Naive thymus-derived CD8-positive, alpha-beta T cell (primary cell): ENCODE measurements at regions of chr3 and their contacts with region 1.

Region 1: GRCh38 chr3:141303481-141304223 is 64.7 kb upstream of the ZBTB38 start:
- DNase-seq: peak in 9 of 10 donors; percentile 39 to 82 (median 72)
- ATAC-seq: peak; percentile 37 to 60
- H3K4me3 Mint-ChIP-seq: no peak overlapping the region
- H3K27ac Mint-ChIP-seq: peak overlapping the region in 4 of 10 donors; percentile 11 to 75 (median 30)
- H3K4me1 Mint-ChIP-seq: peaks cover 32 to 92% (median 60%) of the 10 kb centered on the region in 4 donors
- H3K27me3 Mint-ChIP-seq: no peaks in the 10 kb centered on the region

Region 2: DNA sequence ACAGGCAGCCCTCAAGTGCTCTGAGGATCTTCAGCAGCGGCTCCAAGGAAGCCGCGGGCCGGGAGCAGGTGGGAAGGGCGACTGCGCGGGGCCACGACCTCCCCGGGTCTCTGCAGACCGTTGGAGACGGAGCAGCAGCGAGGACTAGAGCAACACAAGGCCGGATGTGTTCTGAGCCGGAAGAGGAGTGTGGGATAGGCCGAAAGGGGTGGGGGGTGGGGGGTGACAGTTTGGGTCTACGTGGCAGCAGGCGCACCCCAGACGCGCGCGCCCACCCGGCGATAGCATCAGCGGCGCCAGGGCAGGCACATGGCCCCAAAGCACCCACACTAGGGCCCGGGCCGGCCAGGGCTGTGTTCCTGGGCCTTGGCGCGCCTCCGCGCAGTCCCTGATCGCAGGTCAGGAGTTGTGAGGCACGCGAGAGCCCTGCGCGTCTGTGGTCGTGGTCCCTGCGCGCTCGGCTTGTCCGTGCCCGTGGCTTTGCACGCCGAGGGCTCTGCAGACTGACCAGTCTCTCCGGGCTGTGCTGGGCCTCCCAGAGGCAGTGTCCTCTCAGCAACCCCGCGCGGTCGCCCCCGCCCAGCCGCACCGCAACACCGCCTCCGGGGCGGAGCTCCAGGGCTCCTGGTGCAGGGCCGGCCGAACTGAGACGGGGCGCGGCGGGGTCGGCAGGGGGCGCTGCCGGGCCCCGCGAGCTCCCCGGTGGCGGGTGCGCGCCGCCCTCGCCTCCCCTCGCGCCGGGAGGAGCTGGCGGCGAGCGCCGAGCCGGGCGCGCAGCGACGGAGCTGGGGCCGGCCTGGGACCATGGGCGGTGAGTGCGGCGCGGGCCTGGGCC is 72.3 kb before region 1 on chr3 and contains the start of gene PXYLP1:
- POLR2A ChIA-PET with region 1: interaction called, 58 read pairs
- DNase-seq: peak; percentile 77 to 91 (median 90)
- ATAC-seq: peak; percentile 88 to 89
- H3K4me3 Mint-ChIP-seq: peak within 1 kb of the TSS; percentile 89 to 98 (median 93)
- H3K27ac Mint-ChIP-seq: peak within 1 kb of the TSS; percentile 95 to 99 (median 98)
- H3K4me1 Mint-ChIP-seq: peaks cover 33 to 70% (median 52%) of the 10 kb centered on the region in 4 donors
- H3K27me3 Mint-ChIP-seq: no peaks in the 10 kb centered on the region
- polyA plus RNA-seq, gene PXYLP1: 9.9 to 18.3 (median 16.9) TPM

Region 3: GRCh38 chr3:141266797-141267555 is 36.7 kb before region 1 on chr3:
- POLR2A ChIA-PET with region 1: interaction called, 53 read pairs
- DNase-seq: peak; percentile 7 to 83 (median 42)
- ATAC-seq: peak; percentile 87 to 88
- H3K4me3 Mint-ChIP-seq: peak overlapping the region; percentile 81 to 96 (median 92)
- H3K27ac Mint-ChIP-seq: peak overlapping the region; percentile 94 to 99 (median 98)
- H3K4me1 Mint-ChIP-seq: peaks cover 36 to 71% (median 48%) of the 10 kb centered on the region in 4 donors
- H3K27me3 Mint-ChIP-seq: no peaks in the 10 kb centered on the region

Region 4: DNA sequence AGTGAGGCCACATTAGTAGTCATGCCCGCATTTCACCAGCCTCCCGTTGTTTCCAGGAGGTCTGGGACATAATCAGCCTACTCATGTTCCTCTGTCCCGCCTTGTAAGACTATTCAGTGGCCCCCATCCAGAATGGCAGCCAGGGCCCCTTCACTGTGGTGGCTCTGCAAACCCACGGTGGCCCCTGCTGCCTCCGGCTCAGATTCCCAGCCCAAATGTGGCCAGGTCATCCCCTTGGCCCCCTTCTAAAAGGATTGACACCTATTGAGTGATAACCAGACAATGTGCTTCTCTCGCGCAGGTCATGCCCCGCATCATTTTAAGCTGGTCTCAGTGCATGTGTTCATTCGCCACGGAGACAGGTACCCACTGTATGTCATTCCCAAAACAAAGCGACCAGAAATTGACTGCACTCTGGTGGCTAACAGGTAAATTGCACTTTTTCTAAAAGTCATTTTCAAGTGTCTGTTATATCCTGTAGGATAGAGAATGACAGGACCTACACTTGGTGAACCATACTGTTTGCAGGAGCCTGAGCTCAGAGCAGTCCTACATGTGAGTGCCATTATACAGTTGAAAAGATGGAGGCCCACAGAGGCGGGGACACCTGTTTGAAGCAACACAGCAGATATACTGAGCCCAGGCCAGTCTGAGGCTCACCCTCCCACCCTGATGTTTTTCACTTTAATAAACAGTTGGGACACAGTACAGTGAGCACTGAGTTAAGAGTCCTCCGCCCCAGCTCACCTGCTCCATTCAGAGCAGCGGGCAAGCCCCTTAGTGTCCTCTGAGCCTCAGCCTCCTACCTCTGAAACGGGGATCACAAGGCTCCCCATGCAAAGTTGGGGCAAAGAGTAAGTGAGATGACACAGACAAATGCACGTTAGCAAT is 24.3 kb before region 1 on chr3:
- POLR2A ChIA-PET with region 1: interaction called, 11 read pairs
- DNase-seq: peak in 6 of 10 donors; percentile 17 to 67 (median 43)
- ATAC-seq: peak; percentile 88 to 93
- H3K4me3 Mint-ChIP-seq: peak overlapping the region in 2 of 10 donors; percentile 18 to 22
- H3K27ac Mint-ChIP-seq: peak overlapping the region in 7 of 10 donors; percentile 22 to 83 (median 54)
- H3K4me1 Mint-ChIP-seq: peaks cover 17 to 31% (median 22%) of the 10 kb centered on the region in 4 donors
- H3K27me3 Mint-ChIP-seq: no peaks in the 10 kb centered on the region

Region 5: GRCh38 chr3:141370065-141370533 is 66.4 kb after region 1 on chr3:
- POLR2A ChIA-PET with region 1: interaction called, 10 read pairs
- DNase-seq: peak; percentile 23 to 89 (median 73)
- ATAC-seq: peak; percentile 100
- H3K4me3 Mint-ChIP-seq: no peak overlapping the region
- H3K27ac Mint-ChIP-seq: peak overlapping the region in 4 of 10 donors; percentile 3 to 63 (median 34)
- H3K4me1 Mint-ChIP-seq: peaks cover 0 to 10% (median 7%) of the 10 kb centered on the region in 4 donors
- H3K27me3 Mint-ChIP-seq: no peaks in the 10 kb centered on the region

Region 6: GRCh38 chr3:141452036-141452435 is 148.4 kb after region 1 on chr3:
- POLR2A ChIA-PET with region 1: interaction called, 46 read pairs
- DNase-seq: peak in 8 of 10 donors; percentile 18 to 77 (median 56)
- ATAC-seq: peak; percentile 96 to 97
- H3K4me3 Mint-ChIP-seq: no peak overlapping the region
- H3K27ac Mint-ChIP-seq: no peak overlapping the region
- H3K4me1 Mint-ChIP-seq: peaks cover 5 to 14% (median 11%) of the 10 kb centered on the region in 4 donors
- H3K27me3 Mint-ChIP-seq: no peaks in the 10 kb centered on the region